ENCODE measurements at regions of chr3 and their contacts with region 1.

Region 1: GRCh38 chr3:85567071-85567676 is 608.4 kb downstream of the CADM2 start:
- DNase-seq: peak; percentile 20
- CTCF ChIP-seq: peak; percentile 43

Region 2: DNA sequence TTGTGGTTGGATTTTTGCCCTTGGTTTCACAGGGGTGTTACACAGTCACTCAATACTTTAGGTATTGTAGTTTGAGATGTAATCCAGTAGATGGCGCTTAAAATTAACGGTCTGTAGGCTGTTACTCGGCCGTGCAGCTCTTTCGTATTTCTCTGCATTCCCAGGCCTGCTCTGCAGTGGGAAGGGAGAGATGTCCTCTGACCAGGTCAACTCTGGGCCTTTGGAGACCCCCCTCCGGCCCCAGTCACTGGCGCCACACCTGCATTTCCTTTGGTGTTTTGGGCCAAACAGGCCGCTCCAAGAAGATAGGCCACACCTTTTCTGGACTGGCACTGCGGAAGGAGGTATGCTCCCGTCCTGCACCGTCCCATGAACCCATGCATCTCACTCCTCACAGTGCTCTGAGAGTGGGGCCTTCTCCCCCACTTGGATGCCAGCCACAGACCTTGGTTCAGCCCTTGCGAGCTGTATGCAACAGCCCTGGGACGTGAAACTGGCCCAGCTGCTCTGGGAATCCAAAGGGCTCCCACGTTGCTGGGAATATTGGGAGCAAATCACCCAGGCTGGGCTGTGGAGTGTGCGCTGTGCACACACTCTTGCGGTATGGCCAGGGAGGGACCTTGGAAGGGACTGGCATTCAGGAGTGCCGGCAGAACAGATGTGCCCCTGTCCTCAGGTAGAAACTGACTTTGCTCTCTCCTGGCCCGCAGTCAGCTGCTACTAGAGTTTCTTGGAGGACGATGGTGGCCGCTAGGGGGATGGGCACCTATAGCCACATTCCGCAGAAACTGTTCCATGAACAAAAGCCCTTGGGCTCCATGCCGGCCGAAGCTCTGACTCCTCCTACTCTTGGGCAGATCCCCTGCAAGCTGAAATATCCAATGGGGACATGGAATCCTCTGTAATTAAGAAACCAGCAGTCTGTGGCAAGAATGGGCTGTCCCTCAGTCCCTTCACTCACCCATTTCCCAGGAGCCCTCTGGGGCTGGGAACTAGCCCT is 1018.9 kb before region 1 on chr3:
- in situ Hi-C with region 1: loop called (anchors 25 kb)
- DNase-seq: peak; percentile 31
- CTCF ChIP-seq: peak; percentile 48

Region 3: DNA sequence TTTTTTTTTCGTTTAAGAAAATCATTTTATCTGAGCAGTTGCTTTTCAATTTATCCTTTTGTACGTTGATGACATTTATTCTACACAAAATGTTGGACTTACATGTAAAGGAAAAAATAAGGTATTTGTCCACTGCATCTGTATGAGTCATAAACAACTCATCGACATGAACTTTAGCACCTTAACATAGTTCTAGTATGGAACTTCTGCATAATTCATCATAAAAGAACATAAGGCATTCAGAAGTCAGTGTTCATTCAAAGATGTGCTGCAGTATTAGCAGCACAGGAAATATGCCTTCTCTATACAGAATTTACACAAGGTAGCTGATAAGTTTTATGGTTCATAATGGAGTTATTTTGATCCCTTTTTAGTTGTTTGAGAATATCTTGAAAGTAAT is 193.2 kb after region 1 on chr3:
- in situ Hi-C with region 1: no loop called
- DNase-seq: no peak
- CTCF ChIP-seq: no peak

Measured in GM13976 (cell line).